ENCODE measurements at regions of chr12 and their contacts with region 1.

Region 1: DNA sequence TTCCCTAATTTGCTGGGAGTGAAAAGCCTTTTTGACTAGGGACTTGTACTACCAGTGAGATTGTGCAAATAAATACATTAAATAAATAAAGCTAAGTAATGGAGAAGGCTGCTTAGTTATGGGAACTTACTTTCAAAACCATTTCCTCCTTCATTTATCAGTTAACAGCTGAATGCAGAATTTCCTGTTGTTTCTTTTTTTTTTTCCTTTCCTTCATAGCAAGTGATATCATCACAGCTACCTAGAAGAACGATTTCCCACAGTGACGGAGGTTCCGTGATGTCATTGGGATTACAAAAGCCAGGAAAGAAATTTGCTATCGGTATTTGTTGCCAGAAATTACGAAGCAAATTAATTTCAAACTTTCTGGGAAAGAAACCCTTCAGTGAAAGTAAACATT is 42.1 kb upstream of the SOCS2 start:
- DNase-seq: no peak
- ATAC-seq: no peak
- H3K4me3 ChIP-seq: no peak overlapping the region
- H3K27ac ChIP-seq: no peak overlapping the region
- H3K4me1 ChIP-seq: peaks cover 0 to 7% (median 0%) of the 10 kb centered on the region in 9 donors
- H3K27me3 ChIP-seq: no peaks in the 10 kb centered on the region
- CTCF ChIP-seq: no peak

Region 2: DNA sequence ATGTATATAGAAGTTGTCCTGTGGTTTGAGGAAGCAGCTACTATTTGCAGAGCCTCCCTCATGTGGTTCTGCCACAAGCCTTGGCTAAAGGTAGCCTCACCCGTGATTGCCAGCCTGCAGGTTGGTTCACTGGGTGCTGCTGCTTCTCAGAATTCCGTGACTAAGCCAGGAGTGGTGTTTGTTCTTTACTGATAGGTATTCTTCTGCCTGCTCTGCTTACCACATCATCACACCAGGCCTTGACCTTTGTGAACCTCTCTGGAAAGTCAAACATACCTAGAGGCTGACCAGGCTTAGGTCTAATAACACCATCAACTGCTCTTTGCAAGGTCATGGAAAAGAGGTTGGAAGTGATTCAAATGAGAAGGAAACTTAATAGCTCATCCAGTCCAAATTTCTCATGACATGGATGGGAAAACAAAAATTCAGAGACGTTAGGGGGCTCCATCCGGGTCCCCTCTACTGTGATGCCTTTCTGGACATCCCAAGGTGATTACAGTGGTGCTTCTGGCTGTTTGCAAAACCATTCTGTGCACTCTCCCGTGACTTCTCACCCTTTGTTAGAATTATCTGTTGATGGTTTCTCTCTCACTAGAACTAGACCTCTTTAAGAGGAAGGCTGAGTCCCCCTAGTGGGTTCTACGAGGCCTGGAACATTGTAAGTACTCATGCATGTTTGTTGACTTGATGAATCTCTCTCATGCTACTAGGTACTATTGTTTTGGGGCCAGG is 33.6 kb after region 1 on chr12:
- intact Hi-C with region 1: loop called in 1 of 10 experiments (anchors 2 kb)
- DNase-seq: no peak
- ATAC-seq: peak in 1 of 8 donors; percentile 33
- H3K4me3 ChIP-seq: no peak overlapping the region
- H3K27ac ChIP-seq: no peak overlapping the region
- H3K4me1 ChIP-seq: peaks cover 0 to 1% (median 0%) of the 10 kb centered on the region in 9 donors
- H3K27me3 ChIP-seq: peaks cover 0 to 17% (median 0%) of the 10 kb centered on the region in 7 donors
- CTCF ChIP-seq: peak in 5 of 9 donors; percentile 19 to 44 (median 35)

Region 3: GRCh38 chr12:93894391-93895088 is 364.2 kb after region 1 on chr12:
- intact Hi-C with region 1: no loop called
- DNase-seq: peak; percentile 85 to 95
- ATAC-seq: peak; percentile 88 to 96 (median 90)
- H3K4me3 ChIP-seq: peak overlapping the region in 7 of 10 donors; percentile 7 to 35 (median 28)
- H3K27ac ChIP-seq: peak overlapping the region; percentile 70 to 94 (median 86)
- H3K4me1 ChIP-seq: peaks cover 20 to 55% (median 42%) of the 10 kb centered on the region in 9 donors
- H3K27me3 ChIP-seq: no peaks in the 10 kb centered on the region
- CTCF ChIP-seq: peak in 2 of 9 donors; percentile 5 to 8

Measured in heart right ventricle (tissue), 16 donors.